ENCODE measurements at regions of chr5 and their contacts with region 1.

Region 1: GRCh38 chr5:173581408-173582215 is 34.8 kb downstream of the BOD1 start:
- DNase-seq: peak; percentile 27
- ATAC-seq: peak; percentile 60
- H3K4me3 ChIP-seq: no peak overlapping the region
- H3K27ac ChIP-seq: peak overlapping the region; percentile 55; the same call in 1 of the 2 replicates
- H3K4me1 ChIP-seq: peaks cover 11% of the 10 kb centered on the region; the same call in 1 of the 2 replicates
- H3K27me3 ChIP-seq: no peaks in the 10 kb centered on the region
- CTCF ChIP-seq: peak; percentile 67
- POLR2A ChIP-seq: no peak
- RAD21 ChIP-seq: peak; percentile 58

Region 2: DNA sequence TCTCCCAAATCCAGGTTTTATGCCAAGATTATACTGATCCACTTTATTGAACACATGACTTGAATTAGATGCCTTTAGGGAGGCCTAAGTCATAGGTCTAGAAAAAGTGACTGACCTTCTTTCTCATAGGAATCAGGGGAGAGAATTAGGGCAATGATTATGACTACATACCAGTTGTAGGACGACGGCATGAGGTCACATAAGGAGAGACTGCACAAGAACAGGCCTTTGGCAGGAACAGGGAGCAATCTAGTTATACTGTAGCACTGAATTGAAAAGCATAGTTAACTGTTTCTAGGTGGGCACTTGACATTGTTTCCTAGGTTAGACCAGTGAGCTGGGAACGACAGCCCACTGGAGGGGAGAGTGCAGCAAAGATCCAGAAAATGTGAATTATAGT is 502.7 kb before region 1 on chr5:
- CTCF ChIA-PET with region 1: no interaction called
- POLR2A ChIA-PET with region 1: no interaction called
- dilution Hi-C with region 1: no loop called
- in situ Hi-C with region 1: no loop called
- intact Hi-C with region 1: no loop called
- DNase-seq: no peak
- ATAC-seq: no peak
- H3K4me3 ChIP-seq: no peak overlapping the region
- H3K27ac ChIP-seq: no peak overlapping the region
- H3K4me1 ChIP-seq: no peaks in the 10 kb centered on the region
- H3K27me3 ChIP-seq: no peaks in the 10 kb centered on the region
- CTCF ChIP-seq: no peak
- POLR2A ChIP-seq: no peak
- RAD21 ChIP-seq: no peak

Region 3: DNA sequence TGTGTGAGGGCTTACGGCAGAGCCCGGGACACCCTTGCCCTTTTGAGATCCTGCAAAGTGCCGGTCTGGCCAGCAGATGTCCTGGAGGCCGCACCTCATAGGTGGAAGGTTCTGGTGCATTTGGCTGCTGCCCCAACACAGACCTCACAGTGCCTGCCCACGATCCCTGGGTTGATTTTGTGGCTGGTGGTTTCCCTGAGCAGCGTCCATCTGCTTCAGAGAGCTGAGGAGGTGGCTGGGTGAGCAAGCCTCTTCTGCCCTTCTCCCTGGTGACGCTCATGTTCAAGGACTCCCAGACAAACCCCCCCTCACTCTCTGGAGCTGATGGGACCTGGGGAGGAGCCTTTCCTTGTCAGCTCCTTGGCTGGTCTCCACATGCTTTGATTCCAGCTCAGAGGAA is 418.4 kb before region 1 on chr5:
- CTCF ChIA-PET with region 1: no interaction called
- POLR2A ChIA-PET with region 1: no interaction called
- dilution Hi-C with region 1: no loop called
- in situ Hi-C with region 1: loop called (anchors 25 kb)
- intact Hi-C with region 1: no loop called
- DNase-seq: peak; percentile 55
- ATAC-seq: no peak
- H3K4me3 ChIP-seq: no peak overlapping the region
- H3K27ac ChIP-seq: no peak overlapping the region
- H3K4me1 ChIP-seq: peaks cover 2% of the 10 kb centered on the region; the same call in 1 of the 2 replicates
- H3K27me3 ChIP-seq: no peaks in the 10 kb centered on the region
- CTCF ChIP-seq: no peak
- POLR2A ChIP-seq: no peak
- RAD21 ChIP-seq: no peak

Measured in IMR-90 (cell line).